Activated CD4-positive, alpha-beta T cell treated with anti-CD3 and anti-CD28 coated beads, Interleukin-2, amount 10 ng/mL, durations not matched to agents 24 days and 14 days (primary cell): ENCODE measurements at regions of chr6 and their contacts with region 1.

Region 1: DNA sequence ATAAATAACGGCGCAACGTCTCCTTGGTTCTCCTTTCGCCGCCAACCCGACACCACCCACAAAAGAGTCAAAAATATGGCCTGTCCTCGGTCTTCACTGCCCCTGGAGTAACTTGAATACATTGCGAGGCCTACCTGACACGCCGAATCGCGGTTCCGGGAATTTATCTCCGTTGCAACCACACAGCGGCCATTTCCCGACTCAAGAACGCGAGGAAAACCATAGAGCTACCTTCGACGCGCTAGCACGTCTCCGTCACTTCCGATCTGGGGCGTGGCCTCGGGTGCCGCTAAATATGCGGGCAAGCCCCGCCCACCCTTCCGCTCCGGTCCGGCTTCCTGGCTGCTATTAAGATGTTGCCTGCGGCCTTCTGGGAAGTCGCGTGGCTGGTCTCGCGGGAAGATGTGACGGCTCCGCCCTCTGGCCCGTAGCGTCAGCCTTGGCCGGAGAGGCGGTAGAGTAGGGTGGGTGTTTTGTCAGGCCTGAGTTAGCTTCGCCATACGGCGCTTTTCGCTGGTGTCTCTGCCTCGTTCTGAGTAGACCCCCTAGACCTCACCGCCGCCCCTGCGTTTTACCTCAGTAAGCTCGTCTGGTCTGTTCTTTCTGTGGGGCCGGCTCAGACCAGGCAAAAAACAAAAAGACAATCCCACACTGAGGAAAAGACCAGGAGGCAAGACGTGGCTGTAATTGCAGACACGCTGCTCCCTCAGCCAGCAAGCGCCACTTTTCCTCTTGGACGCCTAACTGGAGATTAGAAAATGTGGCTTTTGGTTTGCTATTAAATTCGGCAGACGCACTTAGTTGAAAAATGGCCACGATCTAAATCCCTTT is at the start of gene BCLAF1:
- DNase-seq: peak; percentile 100
- H3K4me3 Mint-ChIP-seq: peak within 1 kb of the TSS; percentile 92
- H3K27ac Mint-ChIP-seq: peak within 1 kb of the TSS; percentile 100
- H3K4me1 Mint-ChIP-seq: peaks cover 41% of the 10 kb centered on the region
- H3K27me3 Mint-ChIP-seq: peaks cover 2% of the 10 kb centered on the region
- total RNA-seq, gene BCLAF1: 267 TPM in 2 replicates

Region 2: DNA sequence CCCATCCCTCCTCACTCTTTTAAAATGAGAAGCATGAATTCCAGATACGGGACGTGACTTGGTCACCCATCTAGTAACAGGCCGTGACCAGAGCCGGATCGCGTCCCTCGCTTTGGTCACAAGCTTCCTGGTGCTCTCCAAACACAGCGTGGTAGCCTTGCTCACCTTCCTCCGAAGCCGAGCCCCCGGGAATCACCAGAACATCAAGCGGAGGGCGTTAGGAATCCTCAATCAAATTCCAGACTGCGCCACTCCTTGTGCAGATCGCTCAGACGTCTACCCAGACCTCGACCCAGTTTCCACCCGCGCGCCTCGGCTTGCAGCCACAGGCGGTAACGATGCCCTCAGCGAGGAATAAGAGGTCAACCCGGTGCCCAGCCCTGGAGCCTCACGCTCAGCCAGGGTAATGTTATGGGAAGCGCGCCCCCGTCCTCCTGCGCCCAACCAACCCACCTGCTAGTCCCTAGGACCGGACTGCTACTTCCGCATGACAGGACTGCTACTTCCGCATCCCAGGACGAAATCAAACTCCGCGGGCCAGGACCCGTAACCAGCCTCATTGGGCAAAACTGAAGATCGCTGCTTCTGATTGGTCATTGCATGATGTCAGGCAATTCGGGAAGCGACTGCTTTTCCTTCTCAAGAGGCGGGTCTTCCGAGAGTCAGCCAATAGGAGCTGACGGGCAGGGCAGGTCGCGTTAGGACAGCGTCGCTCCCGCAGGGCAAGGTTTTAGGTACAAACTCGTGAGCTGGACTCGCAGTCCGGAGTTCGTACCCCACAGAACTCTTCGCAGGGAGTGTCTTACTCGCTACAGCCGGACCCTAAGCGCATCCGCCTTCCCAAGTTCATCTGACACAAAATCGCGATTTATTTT is 39.7 kb before region 1 on chr6 and contains the start of gene MTFR2:
- intact Hi-C with region 1: loop called (anchors 1 kb)
- DNase-seq: peak; percentile 98
- H3K4me3 Mint-ChIP-seq: peak within 1 kb of the TSS; percentile 97
- H3K27ac Mint-ChIP-seq: peak within 1 kb of the TSS; percentile 91
- H3K4me1 Mint-ChIP-seq: peaks cover 52% of the 10 kb centered on the region
- H3K27me3 Mint-ChIP-seq: no peaks in the 10 kb centered on the region
- total RNA-seq, gene MTFR2: 24.4 and 24.6 TPM in 2 replicates